Endothelial cell of umbilical vein (primary cell): ENCODE measurements at regions of chr20 and their contacts with region 1.

Region 1: GRCh38 chr20:833450-834150 is at the start of gene FAM110A:
- DNase-seq: peak; percentile 94
- H3K4me3 ChIP-seq: peak within 1 kb of the TSS; percentile 60 to 71 (median 66)
- H3K27ac ChIP-seq: peak within 1 kb of the TSS; percentile 88
- H3K4me1 ChIP-seq: peaks cover 43% of the 10 kb centered on the region
- H3K27me3 ChIP-seq: no peaks in the 10 kb centered on the region
- CTCF ChIP-seq: no peak
- POLR2A ChIP-seq: no peak
- total RNA-seq, gene FAM110A: 4.6 and 5.8 TPM in 2 replicates

Region 2: GRCh38 chr20:543369-544152 is 290.0 kb before region 1 on chr20 and contains the start of gene CSNK2A1:
- CTCF ChIA-PET with region 1: no interaction called
- POLR2A ChIA-PET with region 1: no interaction called
- dilution Hi-C with region 1: no loop called
- intact Hi-C with region 1: loop called (anchors 10 kb)
- DNase-seq: peak; percentile 97
- H3K4me3 ChIP-seq: peak within 1 kb of the TSS; percentile 76 to 100 (median 93)
- H3K27ac ChIP-seq: peak within 1 kb of the TSS; percentile 89
- H3K4me1 ChIP-seq: peaks cover 28% of the 10 kb centered on the region
- H3K27me3 ChIP-seq: peaks cover 6 to 8% of the 10 kb centered on the region in 2 experiments
- CTCF ChIP-seq: no peak
- POLR2A ChIP-seq: peak; percentile 86
- total RNA-seq, gene CSNK2A1: 134 and 142 TPM in 2 replicates

Region 3: GRCh38 chr20:653110-653589 is 180.4 kb before region 1 on chr20 and contains the start of gene SRXN1:
- CTCF ChIA-PET with region 1: no interaction called
- POLR2A ChIA-PET with region 1: no interaction called
- dilution Hi-C with region 1: no loop called
- intact Hi-C with region 1: loop called (anchors 1 kb)
- DNase-seq: peak; percentile 87
- H3K4me3 ChIP-seq: peak within 1 kb of the TSS; percentile 71 to 77 (median 72)
- H3K27ac ChIP-seq: peak within 1 kb of the TSS; percentile 65
- H3K4me1 ChIP-seq: peaks cover 15% of the 10 kb centered on the region
- H3K27me3 ChIP-seq: peaks cover 11 to 12% of the 10 kb centered on the region in 2 experiments
- CTCF ChIP-seq: peak; percentile 55 to 65
- POLR2A ChIP-seq: peak; percentile 76
- total RNA-seq, gene SRXN1: 24.9 and 29.7 TPM in 2 replicates

Region 4: GRCh38 chr20:844473-845225 is 11.0 kb after region 1 on chr20:
- CTCF ChIA-PET with region 1: interaction called, 11 read pairs
- POLR2A ChIA-PET with region 1: no interaction called
- dilution Hi-C with region 1: no loop called
- intact Hi-C with region 1: loop called (anchors 1 kb)
- DNase-seq: peak; percentile 88
- H3K4me3 ChIP-seq: peak overlapping the region in 2 of 3 experiments; percentile 11 to 29
- H3K27ac ChIP-seq: no peak overlapping the region
- H3K4me1 ChIP-seq: peaks cover 28% of the 10 kb centered on the region
- H3K27me3 ChIP-seq: no peaks in the 10 kb centered on the region
- CTCF ChIP-seq: no peak
- POLR2A ChIP-seq: no peak

Region 5: DNA sequence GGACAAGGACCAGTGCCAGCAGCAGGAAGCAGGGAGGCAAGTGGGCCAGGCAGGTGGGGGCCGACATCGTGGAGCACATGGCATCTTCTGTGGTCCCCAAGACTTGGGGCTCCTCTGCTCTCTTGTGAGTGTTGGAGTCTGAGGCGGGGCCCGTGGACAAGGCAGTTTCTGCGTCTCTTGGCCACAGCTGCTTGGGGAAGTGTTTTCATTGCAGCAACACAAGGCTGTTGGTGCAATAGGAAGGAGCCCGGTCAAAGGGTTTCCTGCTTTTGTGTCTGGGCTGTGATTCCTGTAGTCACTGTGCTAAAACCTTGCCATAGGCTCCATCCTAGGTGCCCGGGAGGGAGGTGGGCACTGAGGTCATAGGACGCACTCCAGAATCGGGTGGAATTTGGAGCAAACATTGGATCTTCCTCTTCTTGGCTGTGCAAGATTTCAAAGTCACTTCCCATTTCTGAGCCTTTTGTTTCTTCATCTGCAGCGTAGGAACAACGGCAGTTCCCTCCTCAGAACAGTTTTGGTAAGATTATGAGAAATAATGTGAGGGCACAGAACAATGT is 657.8 kb after region 1 on chr20 and contains the start of gene SIRPB2:
- CTCF ChIA-PET with region 1: no interaction called
- POLR2A ChIA-PET with region 1: no interaction called
- dilution Hi-C with region 1: no loop called
- intact Hi-C with region 1: loop called (anchors 10 kb)
- DNase-seq: peak; percentile 96
- H3K4me3 ChIP-seq: peak within 1 kb of the TSS in 2 of 3 experiments; percentile 25 to 47
- H3K27ac ChIP-seq: peak within 1 kb of the TSS; percentile 90
- H3K4me1 ChIP-seq: peaks cover 31% of the 10 kb centered on the region
- H3K27me3 ChIP-seq: peaks cover 0 to 2% of the 10 kb centered on the region in 2 experiments
- CTCF ChIP-seq: no peak
- POLR2A ChIP-seq: peak; percentile 30
- total RNA-seq, gene SIRPB2: 9.5 and 12.3 TPM in 2 replicates